ENCODE measurements at regions of chr13 and their contacts with region 1.

Region 1: GRCh38 chr13:83765796-83766195 is 116.5 kb downstream of the SLITRK1 start:
- DNase-seq: no peak
- H3K4me3 ChIP-seq: no peak overlapping the region
- H3K4me3 Mint-ChIP-seq: no peak overlapping the region
- H3K27ac Mint-ChIP-seq: no peak overlapping the region
- H3K4me1 ChIP-seq: no peaks in the 10 kb centered on the region
- H3K4me1 Mint-ChIP-seq: no peaks in the 10 kb centered on the region
- H3K27me3 ChIP-seq: no peaks in the 10 kb centered on the region
- H3K27me3 Mint-ChIP-seq: peaks cover 8% of the 10 kb centered on the region
- CTCF ChIP-seq: no peak

Region 2: DNA sequence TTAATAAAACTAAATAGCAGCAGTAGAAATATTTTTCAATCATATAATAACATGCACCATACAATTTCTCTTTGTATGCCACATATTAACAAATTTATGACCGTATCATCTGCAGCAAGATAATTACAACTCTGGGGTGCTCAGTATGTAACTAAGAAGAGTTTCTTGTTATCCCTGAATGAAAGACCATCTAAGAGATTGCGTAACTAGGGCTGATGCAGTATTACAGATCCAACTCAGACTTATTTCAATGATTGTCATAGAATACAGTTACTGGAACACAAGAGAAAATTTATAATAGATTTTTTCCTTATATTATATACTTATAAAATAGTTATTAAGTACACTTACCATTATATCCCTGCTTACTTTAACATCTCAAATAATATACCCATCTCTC is 188.6 kb before region 1 on chr13:
- CTCF ChIA-PET with region 1: no interaction called
- POLR2A ChIA-PET with region 1: no interaction called
- intact Hi-C with region 1: no loop called
- DNase-seq: no peak
- H3K4me3 ChIP-seq: no peak overlapping the region
- H3K4me3 Mint-ChIP-seq: no peak overlapping the region
- H3K27ac Mint-ChIP-seq: no peak overlapping the region
- H3K4me1 ChIP-seq: no peaks in the 10 kb centered on the region
- H3K4me1 Mint-ChIP-seq: no peaks in the 10 kb centered on the region
- H3K27me3 ChIP-seq: no peaks in the 10 kb centered on the region
- H3K27me3 Mint-ChIP-seq: peaks cover 3% of the 10 kb centered on the region
- CTCF ChIP-seq: no peak

Region 3: GRCh38 chr13:83740622-83741021 is 25.2 kb before region 1 on chr13:
- CTCF ChIA-PET with region 1: no interaction called
- POLR2A ChIA-PET with region 1: no interaction called
- intact Hi-C with region 1: loop called (anchors 2 kb)
- DNase-seq: no peak
- H3K4me3 ChIP-seq: no peak overlapping the region
- H3K4me3 Mint-ChIP-seq: no peak overlapping the region
- H3K27ac Mint-ChIP-seq: no peak overlapping the region
- H3K4me1 ChIP-seq: no peaks in the 10 kb centered on the region
- H3K4me1 Mint-ChIP-seq: no peaks in the 10 kb centered on the region
- H3K27me3 ChIP-seq: no peaks in the 10 kb centered on the region
- H3K27me3 Mint-ChIP-seq: peaks cover 3% of the 10 kb centered on the region
- CTCF ChIP-seq: no peak

Region 4: DNA sequence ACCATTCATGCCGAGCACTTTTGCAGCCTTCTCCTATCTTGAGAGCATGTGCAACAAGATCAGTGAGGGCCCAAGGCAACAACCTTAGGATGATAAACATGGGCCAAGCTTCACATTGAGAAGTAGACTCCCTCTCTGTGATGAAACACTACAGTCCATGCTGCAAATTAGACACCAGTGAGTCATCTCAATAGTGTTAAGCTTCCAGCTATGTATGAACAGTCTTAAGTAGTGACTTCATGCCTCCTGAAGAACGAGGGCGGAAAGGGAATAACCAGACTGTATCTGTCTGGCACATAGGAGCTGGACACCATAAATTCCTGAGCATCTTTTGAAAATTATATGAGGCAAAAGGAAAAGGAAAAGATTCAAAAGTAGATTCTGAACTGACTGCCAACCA is 426.3 kb after region 1 on chr13:
- CTCF ChIA-PET with region 1: no interaction called
- POLR2A ChIA-PET with region 1: no interaction called
- intact Hi-C with region 1: no loop called
- DNase-seq: no peak
- H3K4me3 ChIP-seq: no peak overlapping the region
- H3K4me3 Mint-ChIP-seq: no peak overlapping the region
- H3K27ac Mint-ChIP-seq: no peak overlapping the region
- H3K4me1 ChIP-seq: no peaks in the 10 kb centered on the region
- H3K4me1 Mint-ChIP-seq: no peaks in the 10 kb centered on the region
- H3K27me3 ChIP-seq: no peaks in the 10 kb centered on the region
- H3K27me3 Mint-ChIP-seq: no peaks in the 10 kb centered on the region
- CTCF ChIP-seq: no peak